Breast epithelium (tissue), 4 donors: ENCODE measurements at regions of chr5 and their contacts with region 1.

Region 1: GRCh38 chr5:54909911-54910870 is 75.2 kb downstream of the ESM1 start:
- DNase-seq: no peak
- H3K4me3 ChIP-seq: no peak overlapping the region
- H3K27ac ChIP-seq: no peak overlapping the region
- H3K4me1 ChIP-seq: no peaks in the 10 kb centered on the region
- H3K27me3 ChIP-seq: peaks cover 0 to 5% of the 10 kb centered on the region in 2 donors
- CTCF ChIP-seq: no peak
- POLR2A ChIP-seq: no peak

Region 2: GRCh38 chr5:54820346-54821134 is 89.7 kb before region 1 on chr5:
- intact Hi-C with region 1: loop called (anchors 5 kb)
- DNase-seq: no peak
- H3K4me3 ChIP-seq: no peak overlapping the region
- H3K27ac ChIP-seq: no peak overlapping the region
- H3K4me1 ChIP-seq: no peaks in the 10 kb centered on the region
- H3K27me3 ChIP-seq: no peaks in the 10 kb centered on the region
- CTCF ChIP-seq: no peak
- POLR2A ChIP-seq: no peak